Colonic mucosa (tissue), 4 donors: ENCODE measurements at regions of chr14 and their contacts with region 1.

Region 1: GRCh38 chr14:99518441-99519346 is 37.5 kb downstream of the CCNK start:
- DNase-seq: peak; percentile 86
- H3K4me3 ChIP-seq: no peak overlapping the region
- H3K27ac ChIP-seq: no peak overlapping the region
- H3K4me1 ChIP-seq: peaks cover 6% of the 10 kb centered on the region
- H3K27me3 ChIP-seq: no peaks in the 10 kb centered on the region
- CTCF ChIP-seq: peak; percentile 96

Region 2: DNA sequence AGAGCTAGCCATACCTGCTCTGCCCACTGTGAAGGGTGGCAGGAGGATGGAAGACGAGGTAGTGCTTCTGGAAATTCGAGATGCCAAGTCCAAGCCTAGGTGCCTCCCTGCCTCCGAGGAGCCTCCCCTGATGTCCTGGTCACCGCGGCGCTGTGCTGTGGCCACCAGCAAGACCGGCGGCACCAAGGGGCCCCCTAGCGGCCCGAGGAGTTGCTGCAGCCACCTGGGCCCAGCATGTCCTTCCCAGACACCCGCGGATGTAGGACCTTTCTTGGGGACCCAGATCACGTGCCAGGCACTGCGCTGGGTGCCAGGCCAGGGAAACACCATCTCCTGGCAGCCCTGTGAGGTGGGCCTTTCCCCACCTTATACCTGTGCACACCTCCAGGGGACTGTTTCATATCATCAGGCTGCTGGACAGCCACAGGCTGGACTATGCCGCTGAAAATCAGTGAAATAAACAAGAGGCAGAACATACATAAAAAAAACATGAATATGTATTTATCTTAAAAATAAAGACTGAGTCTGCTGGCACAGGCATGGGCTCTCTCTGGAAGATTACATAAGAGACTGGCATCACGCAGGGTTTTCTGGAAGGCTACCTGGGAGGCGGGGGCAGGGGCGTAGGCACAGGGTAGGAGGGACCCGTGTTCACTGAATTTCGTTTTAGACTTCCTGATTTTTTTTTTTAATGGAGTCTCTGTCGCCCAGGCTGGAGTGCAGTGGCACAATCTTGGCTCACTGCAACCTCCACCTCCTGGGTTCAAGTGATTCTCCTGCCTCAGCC is 110.3 kb after region 1 on chr14:
- intact Hi-C with region 1: loop called (anchors 2 kb)
- DNase-seq: peak; percentile 74
- H3K4me3 ChIP-seq: no peak overlapping the region
- H3K27ac ChIP-seq: no peak overlapping the region
- H3K4me1 ChIP-seq: no peaks in the 10 kb centered on the region
- H3K27me3 ChIP-seq: no peaks in the 10 kb centered on the region
- CTCF ChIP-seq: peak; percentile 92